ENCODE measurements at regions of chr3 and their contacts with region 1.

Region 1: GRCh38 chr3:172673210-172673679 is 37.6 kb downstream of the NCEH1 start:
- DNase-seq: peak; percentile 86
- ATAC-seq: peak; percentile 84
- H3K4me3 Mint-ChIP-seq: no peak overlapping the region
- H3K27ac Mint-ChIP-seq: no peak overlapping the region
- H3K4me1 Mint-ChIP-seq: peaks cover 2% of the 10 kb centered on the region
- H3K27me3 Mint-ChIP-seq: no peaks in the 10 kb centered on the region
- CTCF ChIP-seq: peak; percentile 70

Region 2: GRCh38 chr3:172461530-172462138 is 211.6 kb before region 1 on chr3:
- CTCF ChIA-PET with region 1: interaction called, 11 read pairs
- POLR2A ChIA-PET with region 1: no interaction called
- intact Hi-C with region 1: no loop called
- DNase-seq: no peak
- ATAC-seq: peak; percentile 88
- H3K4me3 Mint-ChIP-seq: no peak overlapping the region
- H3K27ac Mint-ChIP-seq: no peak overlapping the region
- H3K4me1 Mint-ChIP-seq: no peaks in the 10 kb centered on the region
- H3K27me3 Mint-ChIP-seq: peaks cover 1% of the 10 kb centered on the region
- CTCF ChIP-seq: peak; percentile 98

Region 3: DNA sequence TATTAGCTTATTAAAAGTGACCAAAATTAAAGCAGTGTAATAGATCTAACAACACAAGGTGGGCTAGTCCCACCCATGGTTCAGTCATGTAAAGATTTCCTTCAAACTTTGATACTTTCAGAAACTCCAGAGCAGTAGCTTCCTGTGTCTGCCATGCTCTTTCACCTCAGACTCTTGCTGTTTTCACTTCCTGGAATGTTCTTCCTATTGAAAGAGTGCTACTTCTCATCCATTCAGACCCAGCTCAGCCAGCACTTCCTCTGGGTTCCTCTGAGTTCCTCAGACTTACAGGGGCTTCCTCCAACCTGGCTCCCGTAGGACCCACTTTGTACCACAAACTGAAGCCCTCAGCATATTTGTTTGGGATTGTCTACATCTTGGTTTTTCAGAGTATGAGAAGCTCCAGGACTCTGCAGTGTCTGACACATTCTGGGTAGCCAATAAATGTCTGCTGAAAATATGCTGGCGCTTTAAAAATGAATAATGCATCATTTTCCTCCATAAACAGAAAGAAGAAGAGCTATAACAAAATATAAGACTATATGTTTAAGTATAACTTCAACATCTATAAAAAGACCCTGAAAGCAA is 19.6 kb after region 1 on chr3:
- CTCF ChIA-PET with region 1: interaction called, 18 read pairs
- POLR2A ChIA-PET with region 1: interaction called, 5 read pairs
- intact Hi-C with region 1: no loop called
- DNase-seq: no peak
- ATAC-seq: no peak
- H3K4me3 Mint-ChIP-seq: no peak overlapping the region
- H3K27ac Mint-ChIP-seq: peak overlapping the region; percentile 32
- H3K4me1 Mint-ChIP-seq: peaks cover 10% of the 10 kb centered on the region
- H3K27me3 Mint-ChIP-seq: no peaks in the 10 kb centered on the region
- CTCF ChIP-seq: no peak

Region 4: DNA sequence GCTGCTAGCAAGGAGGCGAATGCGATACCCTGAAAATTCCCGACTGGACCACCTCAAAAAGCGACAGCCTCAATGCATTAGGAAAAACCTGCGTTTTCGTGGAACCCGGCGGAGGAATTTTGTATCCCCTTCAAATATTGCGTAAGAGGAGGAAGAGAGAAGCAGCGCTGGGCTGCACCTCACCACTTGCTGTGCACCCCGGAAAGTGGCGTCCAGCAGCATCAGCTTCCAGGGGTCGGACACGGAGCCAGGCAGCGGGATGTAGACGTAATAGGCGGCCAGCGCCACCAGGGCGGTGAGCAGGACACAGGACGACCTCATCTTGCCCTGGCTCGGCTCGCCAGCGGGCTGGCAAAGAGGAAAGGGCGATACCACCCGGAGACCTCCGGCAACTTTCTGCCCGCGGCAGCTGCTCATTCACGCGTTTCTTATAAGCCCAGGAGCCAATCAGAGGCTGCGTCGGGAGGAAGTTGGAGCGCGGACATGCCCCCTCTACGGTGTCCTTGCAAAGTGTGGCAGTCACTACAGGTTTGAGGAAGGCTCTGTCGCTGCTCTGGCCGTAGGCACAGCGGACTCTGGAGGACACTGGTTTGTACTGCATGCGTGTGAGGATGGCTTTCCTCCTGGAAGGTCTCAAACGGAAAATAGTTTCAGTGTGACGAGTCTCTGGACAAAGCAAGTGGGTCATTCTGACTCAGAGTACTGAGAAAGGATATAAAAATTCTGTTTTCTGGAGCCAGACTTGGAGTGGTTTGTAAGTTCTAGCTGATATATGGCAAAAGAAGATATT is 37.6 kb after region 1 on chr3 and contains the start of gene NCEH1:
- CTCF ChIA-PET with region 1: interaction called, 21 read pairs
- POLR2A ChIA-PET with region 1: no interaction called
- intact Hi-C with region 1: no loop called
- DNase-seq: peak; percentile 89
- ATAC-seq: peak; percentile 99
- H3K4me3 Mint-ChIP-seq: peak within 1 kb of the TSS; percentile 89
- H3K27ac Mint-ChIP-seq: peak within 1 kb of the TSS; percentile 73
- H3K4me1 Mint-ChIP-seq: peaks cover 19% of the 10 kb centered on the region
- H3K27me3 Mint-ChIP-seq: no peaks in the 10 kb centered on the region
- CTCF ChIP-seq: peak; percentile 66
- total RNA-seq, gene NCEH1: 2.8 to 3.4 TPM

Measured in activated CD8-positive, alpha-beta T cell treated with anti-CD3 and anti-CD28 coated beads for 36 hours (primary cell).